Adrenal gland (tissue), 19 donors: ENCODE measurements at regions of chr20 and their contacts with region 1.

Region 1: GRCh38 chr20:3218307-3218988 is 9.2 kb downstream of the ITPA start:
- DNase-seq: peak; percentile 57 to 79 (median 70)
- H3K4me3 ChIP-seq: no peak overlapping the region
- H3K27ac ChIP-seq: no peak overlapping the region
- H3K4me1 ChIP-seq: peaks cover 0 to 9% of the 10 kb centered on the region in 2 donors
- H3K27me3 ChIP-seq: no peaks in the 10 kb centered on the region
- CTCF ChIP-seq: peak; percentile 83 to 93 (median 89)
- POLR2A ChIP-seq: no peak

Region 2: DNA sequence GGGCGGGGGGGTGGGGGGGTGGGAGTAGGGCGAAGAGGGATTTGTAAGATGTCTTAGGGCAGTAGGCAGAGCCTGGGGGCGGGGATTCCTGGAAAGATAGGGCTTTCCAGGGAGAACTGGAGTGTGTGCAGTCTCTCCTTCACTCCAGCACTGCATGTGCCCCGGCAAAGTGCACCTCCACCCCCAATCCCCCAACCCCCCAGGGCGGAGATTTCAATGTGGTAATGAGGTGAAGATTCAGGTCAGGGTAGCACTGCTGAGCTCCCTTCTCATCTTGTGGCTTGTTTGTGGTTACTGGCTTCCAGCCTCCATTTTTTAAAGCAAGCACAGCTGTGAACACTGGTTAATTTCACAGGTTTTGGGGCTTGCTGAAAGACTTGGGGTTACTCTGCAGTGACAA is 396.4 kb before region 1 on chr20:
- intact Hi-C with region 1: no loop called
- DNase-seq: peak in 2 of 7 donors; percentile 3 to 44
- H3K4me3 ChIP-seq: no peak overlapping the region
- H3K27ac ChIP-seq: no peak overlapping the region
- H3K4me1 ChIP-seq: no peaks in the 10 kb centered on the region
- H3K27me3 ChIP-seq: peaks cover 14% of the 10 kb centered on the region
- CTCF ChIP-seq: no peak
- POLR2A ChIP-seq: no peak

Region 3: GRCh38 chr20:3276680-3277015 is 58.2 kb after region 1 on chr20:
- intact Hi-C with region 1: loop called in 1 of 2 experiments (anchors 5 kb)
- DNase-seq: peak; percentile 32 to 58 (median 41)
- H3K4me3 ChIP-seq: no peak overlapping the region
- H3K27ac ChIP-seq: no peak overlapping the region
- H3K4me1 ChIP-seq: no peaks in the 10 kb centered on the region
- H3K27me3 ChIP-seq: no peaks in the 10 kb centered on the region
- CTCF ChIP-seq: peak in 5 of 6 experiments; percentile 30 to 52 (median 37)
- POLR2A ChIP-seq: no peak

Region 4: GRCh38 chr20:3312940-3313682 is 94.7 kb after region 1 on chr20:
- intact Hi-C with region 1: loop called (anchors 5 to 10 kb)
- DNase-seq: peak; percentile 26 to 66 (median 52)
- H3K4me3 ChIP-seq: no peak overlapping the region
- H3K27ac ChIP-seq: peak overlapping the region; percentile 37 to 84 (median 73)
- H3K4me1 ChIP-seq: peaks cover 45 to 48% of the 10 kb centered on the region in 2 donors
- H3K27me3 ChIP-seq: no peaks in the 10 kb centered on the region
- CTCF ChIP-seq: no peak
- POLR2A ChIP-seq: peak in 1 of 2 donors; percentile 28